ENCODE measurements at regions of chr19 and their contacts with region 1.

Region 1: DNA sequence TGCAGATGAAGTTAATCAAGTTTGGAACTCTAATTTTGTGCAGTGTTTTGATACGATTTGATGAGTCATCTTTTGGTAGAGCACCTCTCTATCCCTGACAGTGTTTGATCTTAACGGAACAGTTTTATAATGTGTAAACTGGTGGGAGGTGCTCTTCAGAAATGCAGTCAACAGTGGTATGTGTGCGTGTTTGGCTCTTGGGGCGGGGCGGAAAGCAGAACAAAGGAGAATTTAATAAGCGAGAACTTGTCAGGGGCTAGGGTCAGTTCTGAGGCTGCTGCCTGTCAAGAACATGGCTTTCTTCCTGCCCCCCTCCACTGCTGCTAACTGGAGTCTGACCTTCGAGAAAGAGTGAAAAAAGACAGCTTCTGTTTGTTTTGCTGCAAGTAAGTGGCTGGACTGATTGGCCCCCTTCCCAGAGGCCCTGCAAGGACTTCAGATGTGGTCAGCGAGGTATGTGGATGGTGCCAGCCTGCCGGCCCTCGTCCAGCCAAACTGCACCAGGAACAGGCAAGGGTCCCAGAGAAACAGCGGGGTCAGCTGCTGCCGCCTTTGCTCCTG is 40.8 kb downstream of the BBC3 start:
- DNase-seq: peak; percentile 84
- H3K4me3 Mint-ChIP-seq: peak overlapping the region; percentile 58
- H3K27ac Mint-ChIP-seq: peak overlapping the region; percentile 68
- H3K4me1 Mint-ChIP-seq: peaks cover 65% of the 10 kb centered on the region
- H3K27me3 Mint-ChIP-seq: no peaks in the 10 kb centered on the region

Region 2: DNA sequence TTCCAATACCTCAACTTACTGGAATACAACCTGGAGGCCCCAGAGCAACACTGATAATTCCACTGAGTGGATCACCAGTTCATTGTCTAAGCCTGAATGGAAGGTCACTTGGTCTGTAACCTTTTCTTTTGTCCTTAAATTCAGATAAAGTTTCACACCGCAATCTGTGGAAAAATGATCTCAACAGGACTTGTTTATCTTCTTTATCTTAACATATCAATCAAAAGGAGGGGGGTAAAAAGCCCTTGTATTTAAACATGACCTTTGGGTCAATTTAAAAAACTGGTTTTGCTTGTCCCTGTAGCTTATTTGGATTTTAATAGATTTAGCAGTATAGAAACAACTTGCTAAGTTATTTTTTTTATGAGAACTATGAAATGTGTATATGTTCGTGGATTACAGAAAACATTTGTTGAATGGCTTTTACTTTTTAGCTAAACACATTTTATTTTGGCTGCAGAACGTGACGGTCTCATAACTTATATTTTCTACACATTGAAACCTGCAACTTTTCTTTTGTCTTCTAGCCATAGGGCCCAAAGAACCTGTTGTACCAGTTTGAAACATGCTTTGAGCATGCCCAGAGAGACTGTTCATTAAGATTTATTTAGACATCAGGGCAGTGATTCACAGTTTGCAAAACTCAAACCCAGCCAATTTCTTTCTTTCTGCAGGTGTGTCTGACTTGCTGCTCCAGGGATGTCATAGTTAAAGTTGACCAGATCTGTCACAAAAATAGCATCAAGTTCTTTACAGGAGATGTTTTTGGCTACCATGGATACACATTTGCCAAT is 37.8 kb before region 1 on chr19:
- CTCF ChIA-PET with region 1: interaction called, 50 read pairs
- POLR2A ChIA-PET with region 1: interaction called, 13 read pairs
- intact Hi-C with region 1: loop called (anchors 1 kb)
- DNase-seq: no peak
- H3K4me3 Mint-ChIP-seq: no peak overlapping the region
- H3K27ac Mint-ChIP-seq: no peak overlapping the region
- H3K4me1 Mint-ChIP-seq: peaks cover 58% of the 10 kb centered on the region
- H3K27me3 Mint-ChIP-seq: no peaks in the 10 kb centered on the region

Region 3: DNA sequence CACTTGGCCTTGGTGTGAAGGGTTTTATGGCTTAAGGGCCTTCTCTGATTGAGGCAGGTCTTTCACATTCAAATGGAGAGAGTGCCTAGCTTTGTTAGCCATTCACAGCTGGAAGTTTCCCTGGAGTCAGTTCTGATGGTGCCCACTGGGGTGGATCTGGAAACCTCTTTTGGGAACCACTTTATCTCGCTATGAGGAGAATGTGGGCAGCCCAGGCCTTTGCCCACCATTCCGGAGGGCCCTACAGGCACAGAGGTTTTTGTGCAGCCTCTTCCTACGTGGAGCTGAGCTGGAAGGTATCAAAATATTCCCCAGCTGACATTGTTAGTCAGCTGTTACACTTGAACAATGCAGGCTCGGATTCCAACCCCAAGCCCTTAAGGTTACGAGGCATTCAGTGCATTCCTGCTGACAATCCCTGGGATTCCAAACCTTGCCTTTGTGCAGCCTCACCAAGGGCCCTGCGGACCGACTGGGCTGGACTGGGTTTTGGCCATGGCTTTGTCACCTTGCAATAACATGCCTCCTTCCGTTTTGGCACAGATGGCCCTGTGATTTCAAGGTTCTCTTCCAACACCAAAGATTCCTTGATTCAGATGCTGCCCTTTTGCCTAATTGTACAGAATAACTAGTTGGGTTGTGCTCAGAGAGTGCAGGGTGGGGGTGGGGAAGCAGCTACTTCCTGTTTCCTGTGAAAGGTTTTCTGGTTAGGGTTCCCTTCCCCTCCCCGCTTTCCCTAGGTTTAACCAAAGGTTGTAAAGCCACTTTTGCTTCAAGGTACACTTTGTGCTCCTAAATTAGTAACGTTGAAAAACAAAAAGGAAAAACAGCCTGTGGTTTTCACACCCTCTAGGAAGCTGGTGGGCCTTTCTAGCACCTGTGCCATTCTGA is 32.6 kb before region 1 on chr19:
- CTCF ChIA-PET with region 1: interaction called, 50 read pairs
- POLR2A ChIA-PET with region 1: interaction called, 16 read pairs
- intact Hi-C with region 1: loop called (anchors 1 kb)
- DNase-seq: peak; percentile 49
- H3K4me3 Mint-ChIP-seq: peak overlapping the region; percentile 43
- H3K27ac Mint-ChIP-seq: peak overlapping the region; percentile 84
- H3K4me1 Mint-ChIP-seq: peaks cover 64% of the 10 kb centered on the region
- H3K27me3 Mint-ChIP-seq: no peaks in the 10 kb centered on the region

Region 4: DNA sequence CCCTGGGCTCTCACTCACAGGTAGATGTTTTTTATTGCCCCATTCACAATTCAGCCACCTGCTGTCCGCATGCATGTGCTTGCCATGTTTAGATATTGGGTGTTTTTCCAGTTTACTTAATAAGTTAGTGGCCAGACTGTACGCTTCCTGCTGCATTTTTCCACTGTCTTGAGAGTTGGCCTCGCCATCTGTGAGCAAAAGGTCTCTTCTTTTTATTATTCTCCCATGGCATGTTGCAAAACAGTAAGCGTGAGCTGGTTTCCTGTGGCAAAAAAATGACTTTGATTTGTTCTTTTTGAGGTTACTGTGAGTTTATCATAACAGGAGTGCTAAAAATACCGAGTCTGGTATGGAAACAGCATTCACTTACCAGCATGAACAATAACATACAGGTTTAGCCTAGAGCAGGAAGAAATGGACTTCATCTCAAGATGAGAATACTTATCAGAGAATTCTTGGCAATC is 13.6 kb before region 1 on chr19:
- CTCF ChIA-PET with region 1: interaction called, 33 read pairs
- POLR2A ChIA-PET with region 1: interaction called, 29 read pairs
- intact Hi-C with region 1: loop called (anchors 1 kb)
- DNase-seq: peak; percentile 64
- H3K4me3 Mint-ChIP-seq: peak overlapping the region; percentile 49
- H3K27ac Mint-ChIP-seq: peak overlapping the region; percentile 90
- H3K4me1 Mint-ChIP-seq: peaks cover 61% of the 10 kb centered on the region
- H3K27me3 Mint-ChIP-seq: no peaks in the 10 kb centered on the region

Region 5: GRCh38 chr19:47210689-47211316 is 20.6 kb after region 1 on chr19:
- CTCF ChIA-PET with region 1: interaction called, 30 read pairs
- POLR2A ChIA-PET with region 1: no interaction called
- intact Hi-C with region 1: no loop called
- DNase-seq: peak; percentile 85
- H3K4me3 Mint-ChIP-seq: no peak overlapping the region
- H3K27ac Mint-ChIP-seq: peak overlapping the region; percentile 85
- H3K4me1 Mint-ChIP-seq: peaks cover 12% of the 10 kb centered on the region
- H3K27me3 Mint-ChIP-seq: no peaks in the 10 kb centered on the region

Region 6: GRCh38 chr19:47225746-47226425 is 35.6 kb after region 1 on chr19:
- CTCF ChIA-PET with region 1: interaction called, 6 read pairs
- POLR2A ChIA-PET with region 1: interaction called, 10 read pairs
- intact Hi-C with region 1: loop called (anchors 1 kb)
- DNase-seq: peak; percentile 88
- H3K4me3 Mint-ChIP-seq: peak overlapping the region; percentile 77
- H3K27ac Mint-ChIP-seq: peak overlapping the region; percentile 89
- H3K4me1 Mint-ChIP-seq: peaks cover 10% of the 10 kb centered on the region
- H3K27me3 Mint-ChIP-seq: no peaks in the 10 kb centered on the region

Region 7: GRCh38 chr19:47231215-47231984 is 41.2 kb after region 1 on chr19:
- CTCF ChIA-PET with region 1: interaction called, 6 read pairs
- POLR2A ChIA-PET with region 1: interaction called, 10 read pairs
- intact Hi-C with region 1: loop called (anchors 1 kb)
- DNase-seq: peak; percentile 93
- H3K4me3 Mint-ChIP-seq: peak overlapping the region; percentile 71
- H3K27ac Mint-ChIP-seq: peak overlapping the region; percentile 63
- H3K4me1 Mint-ChIP-seq: peaks cover 24% of the 10 kb centered on the region
- H3K27me3 Mint-ChIP-seq: no peaks in the 10 kb centered on the region

Measured in activated CD4-positive, alpha-beta memory T cell treated with anti-CD3 and anti-CD28 coated beads for 36 hours (primary cell).